ENCODE measurements at regions of chr6 and their contacts with region 1.

Region 1: GRCh38 chr6:36196880-36197548 is 470 bp downstream of the BRPF3 start:
- DNase-seq: peak; percentile 98
- ATAC-seq: peak; percentile 90
- H3K4me3 ChIP-seq: peak overlapping the region; percentile 17 to 84 (median 62)
- H3K4me3 Mint-ChIP-seq: peak overlapping the region; percentile 94
- H3K27ac ChIP-seq: peak overlapping the region; percentile 78 to 79
- H3K27ac Mint-ChIP-seq: peak overlapping the region; percentile 96
- H3K4me1 ChIP-seq: peaks cover 21 to 22% of the 10 kb centered on the region in 2 donors
- H3K4me1 Mint-ChIP-seq: peaks cover 36% of the 10 kb centered on the region
- H3K27me3 ChIP-seq: no peaks in the 10 kb centered on the region
- H3K27me3 Mint-ChIP-seq: no peaks in the 10 kb centered on the region
- CTCF ChIP-seq: no peak

Region 2: DNA sequence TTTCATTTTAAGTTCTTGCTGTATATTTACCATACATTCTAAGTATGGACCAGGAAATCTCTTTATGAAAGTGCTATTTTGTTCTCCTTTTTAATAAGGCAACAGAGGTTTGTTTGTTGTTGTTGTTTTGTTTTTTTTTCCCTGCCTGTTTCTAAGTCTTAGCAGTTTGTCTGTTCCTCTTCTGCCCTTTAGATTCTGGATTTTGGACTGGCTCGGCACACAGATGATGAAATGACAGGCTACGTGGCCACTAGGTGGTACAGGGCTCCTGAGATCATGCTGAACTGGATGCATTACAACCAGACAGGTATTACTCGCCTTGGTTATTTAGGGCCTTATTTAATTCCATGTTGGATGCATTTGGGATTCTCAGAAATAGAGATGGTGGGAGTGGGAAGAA is 121.4 kb before region 1 on chr6:
- CTCF ChIA-PET with region 1: interaction called, 5 read pairs
- POLR2A ChIA-PET with region 1: interaction called, 3 read pairs
- intact Hi-C with region 1: loop called (anchors 1 kb)
- DNase-seq: peak; percentile 35
- ATAC-seq: no peak
- H3K4me3 ChIP-seq: no peak overlapping the region
- H3K4me3 Mint-ChIP-seq: no peak overlapping the region
- H3K27ac ChIP-seq: no peak overlapping the region
- H3K27ac Mint-ChIP-seq: peak overlapping the region; percentile 8
- H3K4me1 ChIP-seq: no peaks in the 10 kb centered on the region
- H3K4me1 Mint-ChIP-seq: peaks cover 7% of the 10 kb centered on the region
- H3K27me3 ChIP-seq: no peaks in the 10 kb centered on the region
- H3K27me3 Mint-ChIP-seq: no peaks in the 10 kb centered on the region
- CTCF ChIP-seq: peak; percentile 47

Region 3: GRCh38 chr6:37840940-37841300 is 1643.9 kb after region 1 on chr6:
- CTCF ChIA-PET with region 1: no interaction called
- POLR2A ChIA-PET with region 1: no interaction called
- intact Hi-C with region 1: no loop called
- DNase-seq: no peak
- ATAC-seq: no peak
- H3K4me3 ChIP-seq: no peak overlapping the region
- H3K4me3 Mint-ChIP-seq: no peak overlapping the region
- H3K27ac ChIP-seq: no peak overlapping the region
- H3K27ac Mint-ChIP-seq: no peak overlapping the region
- H3K4me1 ChIP-seq: peaks cover 5 to 10% of the 10 kb centered on the region in 2 donors
- H3K4me1 Mint-ChIP-seq: peaks cover 48% of the 10 kb centered on the region
- H3K27me3 ChIP-seq: no peaks in the 10 kb centered on the region
- H3K27me3 Mint-ChIP-seq: no peaks in the 10 kb centered on the region
- CTCF ChIP-seq: no peak